CD4-positive, alpha-beta T cell (primary cell): ENCODE measurements at regions of chr1 and their contacts with region 1.

Region 1: DNA sequence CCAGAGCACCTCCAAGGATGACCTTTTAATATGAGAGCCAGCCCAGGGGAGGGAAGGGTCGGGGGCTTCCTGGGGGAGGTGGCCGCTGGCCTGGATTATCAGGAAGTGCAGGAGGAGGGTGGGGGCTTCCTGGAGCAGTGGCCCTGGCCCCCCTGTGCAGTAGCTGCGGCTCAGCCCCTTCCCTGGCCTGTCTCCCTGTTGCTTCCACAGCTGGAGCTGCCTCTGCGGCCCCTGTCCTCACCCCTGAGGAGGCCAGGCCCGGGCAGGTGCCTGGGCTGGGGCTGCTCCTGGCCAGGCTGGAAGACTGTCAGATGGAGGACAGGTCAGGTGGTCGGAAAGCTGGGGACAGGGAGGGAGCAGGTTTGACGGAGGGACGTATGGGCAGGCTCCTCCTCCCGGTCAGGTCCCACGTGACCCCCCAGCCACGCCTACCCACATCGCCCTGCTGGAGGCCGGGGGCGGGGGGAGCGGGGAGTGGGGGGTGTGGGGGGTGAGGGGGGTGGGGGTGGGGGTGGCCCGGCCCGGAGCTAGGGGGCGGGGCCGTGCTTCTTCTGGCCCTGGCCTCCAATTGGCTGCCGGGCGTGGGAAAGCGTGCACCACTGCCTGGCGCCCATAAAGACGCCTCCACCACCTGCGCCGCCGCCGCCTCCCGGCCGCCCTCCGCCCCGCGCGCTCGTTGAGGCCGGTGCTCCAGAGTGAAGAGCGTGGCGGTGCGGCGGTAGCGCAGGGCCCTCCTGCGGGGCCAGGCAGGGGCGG is 10.2 kb upstream of the TNFRSF14 start:
- DNase-seq: peak; percentile 82 to 97 (median 88)
- ATAC-seq: peak; percentile 45
- H3K4me3 ChIP-seq: peak overlapping the region; percentile 81
- H3K4me3 Mint-ChIP-seq: peak overlapping the region; percentile 95
- H3K27ac ChIP-seq: peak overlapping the region; percentile 96 to 99
- H3K27ac Mint-ChIP-seq: peak overlapping the region; percentile 99
- H3K4me1 ChIP-seq: peaks cover 70% of the 10 kb centered on the region
- H3K4me1 Mint-ChIP-seq: peaks cover 38% of the 10 kb centered on the region
- H3K27me3 ChIP-seq: peaks cover 0 to 2% of the 10 kb centered on the region in 2 experiments
- H3K27me3 Mint-ChIP-seq: no peaks in the 10 kb centered on the region
- CTCF ChIP-seq: no peak

Region 2: DNA sequence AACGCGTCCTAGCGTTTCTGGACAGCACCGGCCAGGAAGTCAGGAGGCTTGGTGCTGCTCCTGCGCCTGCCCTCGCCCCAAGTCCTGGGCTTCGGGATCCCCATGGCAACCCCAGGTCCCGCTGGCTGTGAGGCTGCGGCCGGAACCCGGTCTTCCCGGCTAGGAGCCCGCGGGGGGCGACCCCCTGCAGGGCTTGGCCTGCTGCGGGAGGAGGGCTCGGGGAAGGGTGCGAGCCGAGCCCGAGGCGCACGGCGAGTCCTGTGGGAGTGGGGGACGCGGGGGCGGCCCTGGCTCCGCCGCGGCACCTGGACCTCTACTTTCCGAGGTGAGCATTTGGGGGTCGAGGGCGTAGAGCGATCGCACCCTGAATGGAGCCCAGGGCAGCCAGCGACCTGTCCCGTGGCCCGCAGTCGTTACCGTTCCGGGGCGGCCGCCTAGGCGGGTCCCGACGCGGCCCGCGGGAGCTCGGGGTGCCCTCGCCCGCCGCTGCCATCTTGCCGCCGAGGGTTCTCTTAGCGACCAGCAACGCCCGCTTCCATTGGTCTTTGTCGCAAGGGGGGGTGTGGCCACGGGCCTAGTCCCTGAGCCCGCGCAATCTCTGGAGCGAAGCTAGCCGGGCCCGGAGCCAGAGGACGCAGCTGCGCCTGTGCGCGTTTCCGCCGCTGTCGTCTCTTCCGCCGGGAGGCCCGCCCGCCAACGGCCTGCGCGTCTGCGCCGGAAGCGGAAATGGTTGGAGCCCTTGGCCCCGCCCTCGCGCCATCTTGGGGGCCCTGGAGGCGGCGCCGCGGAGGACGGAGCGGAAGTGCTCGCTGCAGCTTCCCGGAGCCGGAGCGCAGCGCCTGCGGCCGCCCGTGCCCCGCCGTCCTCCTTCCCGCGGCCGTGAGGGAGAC is 154.7 kb before region 1 on chr1 and contains the starts of genes MORN1 and RER1:
- CTCF ChIA-PET with region 1: no interaction called
- POLR2A ChIA-PET with region 1: interaction called, 25 read pairs
- intact Hi-C with region 1: loop called in 1 of 2 experiments (anchors 1 kb)
- DNase-seq: peak; percentile 97 to 100 (median 99)
- ATAC-seq: peak; percentile 95
- H3K4me3 ChIP-seq: peak within 1 kb of the TSS; percentile 64
- H3K4me3 Mint-ChIP-seq: peak within 1 kb of the TSS; percentile 95
- H3K27ac ChIP-seq: peak within 1 kb of the TSS; percentile 60 to 63
- H3K27ac Mint-ChIP-seq: peak within 1 kb of the TSS; percentile 88
- H3K4me1 ChIP-seq: peaks cover 45% of the 10 kb centered on the region
- H3K4me1 Mint-ChIP-seq: peaks cover 31% of the 10 kb centered on the region
- H3K27me3 ChIP-seq: no peaks in the 10 kb centered on the region
- H3K27me3 Mint-ChIP-seq: no peaks in the 10 kb centered on the region
- CTCF ChIP-seq: no peak
- total RNA-seq, gene MORN1: 5.3 to 6.5 TPM
- total RNA-seq, gene RER1: 57.9 to 60.7 TPM

Region 3: DNA sequence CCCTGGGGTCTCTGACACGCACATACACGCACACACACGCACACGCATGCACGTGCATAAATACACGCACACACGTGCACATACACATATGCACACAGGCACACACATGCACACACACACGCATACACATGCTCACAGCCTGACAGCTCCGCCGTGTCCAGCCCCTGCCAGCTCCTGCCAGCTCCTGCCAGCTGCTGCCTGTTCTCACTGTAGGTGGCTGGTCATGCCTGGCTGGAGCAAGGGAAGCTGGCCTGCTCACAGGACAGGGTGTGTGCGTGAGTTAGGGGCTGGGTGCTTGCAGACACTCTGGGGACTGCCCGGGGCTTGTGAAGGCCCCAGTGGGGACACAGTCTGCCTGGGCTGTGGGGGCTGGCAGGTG is 65.0 kb before region 1 on chr1:
- CTCF ChIA-PET with region 1: no interaction called
- POLR2A ChIA-PET with region 1: no interaction called
- intact Hi-C with region 1: no loop called
- DNase-seq: no peak
- ATAC-seq: no peak
- H3K4me3 ChIP-seq: no peak overlapping the region
- H3K4me3 Mint-ChIP-seq: no peak overlapping the region
- H3K27ac ChIP-seq: no peak overlapping the region
- H3K27ac Mint-ChIP-seq: no peak overlapping the region
- H3K4me1 ChIP-seq: no peaks in the 10 kb centered on the region
- H3K4me1 Mint-ChIP-seq: no peaks in the 10 kb centered on the region
- H3K27me3 ChIP-seq: no peaks in the 10 kb centered on the region
- H3K27me3 Mint-ChIP-seq: no peaks in the 10 kb centered on the region
- CTCF ChIP-seq: no peak

Region 4: GRCh38 chr1:2575801-2576663 is 30.1 kb after region 1 on chr1:
- CTCF ChIA-PET with region 1: interaction called, 4 read pairs
- POLR2A ChIA-PET with region 1: interaction called, 23 read pairs
- intact Hi-C with region 1: no loop called
- DNase-seq: peak in 1 of 14 experiments; percentile 40
- ATAC-seq: no peak
- H3K4me3 ChIP-seq: no peak overlapping the region
- H3K4me3 Mint-ChIP-seq: no peak overlapping the region
- H3K27ac ChIP-seq: no peak overlapping the region
- H3K27ac Mint-ChIP-seq: peak overlapping the region; percentile 49
- H3K4me1 ChIP-seq: peaks cover 55% of the 10 kb centered on the region
- H3K4me1 Mint-ChIP-seq: peaks cover 44% of the 10 kb centered on the region
- H3K27me3 ChIP-seq: no peaks in the 10 kb centered on the region
- H3K27me3 Mint-ChIP-seq: no peaks in the 10 kb centered on the region
- CTCF ChIP-seq: no peak